Head of caudate nucleus (tissue), 42 donors: ENCODE measurements at regions of chr11 and their contacts with region 1.

Region 1: GRCh38 chr11:96342961-96343711 is at the start of gene MAML2:
- DNase-seq: peak; percentile 87 to 99 (median 95)

Region 2: DNA sequence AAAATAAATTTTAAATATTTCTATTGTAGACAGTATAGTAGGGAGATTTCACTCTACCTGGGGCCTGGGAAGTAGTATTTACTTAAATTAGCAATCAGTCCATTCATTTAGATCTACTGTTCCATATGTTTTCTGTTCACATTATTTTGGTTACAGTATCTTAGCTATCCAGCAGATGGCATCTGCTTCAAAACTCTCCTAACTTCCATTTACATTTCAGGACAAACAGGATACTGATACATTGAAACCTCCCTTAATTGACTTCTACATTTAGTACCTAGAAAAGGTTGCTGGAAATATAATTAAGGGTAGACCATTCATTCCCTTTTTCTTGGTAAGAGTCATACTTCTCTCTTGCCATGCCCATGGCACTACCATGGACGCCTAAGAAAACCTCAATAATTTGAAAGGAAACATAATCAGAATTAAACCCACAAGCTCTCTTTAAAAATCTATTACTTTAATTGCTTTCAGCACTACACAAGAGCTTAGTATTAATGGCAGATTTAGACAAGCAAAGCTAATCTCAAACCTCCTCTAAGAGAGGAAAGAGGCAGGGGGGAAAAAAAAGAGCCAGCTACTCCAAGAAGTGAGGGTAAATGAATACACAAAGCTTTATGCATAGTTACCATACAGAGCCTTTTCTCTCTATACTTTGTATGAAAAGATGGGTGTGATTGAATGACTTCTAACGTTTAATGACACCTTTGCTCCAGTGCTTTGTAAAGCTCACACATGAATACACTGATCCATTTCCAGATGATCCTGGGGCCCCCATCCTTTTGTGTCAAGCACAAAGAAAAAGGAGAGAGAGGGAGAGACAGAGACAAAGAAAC is 288.0 kb before region 1 on chr11:
- intact Hi-C with region 1: loop called (anchors 5 kb)
- DNase-seq: peak in 1 of 42 donors; percentile 32

Region 3: GRCh38 chr11:96242971-96243647 is 100.0 kb before region 1 on chr11:
- intact Hi-C with region 1: loop called (anchors 5 kb)
- DNase-seq: peak; percentile 75 to 96 (median 88)

Region 4: GRCh38 chr11:96267496-96268032 is 75.6 kb before region 1 on chr11:
- intact Hi-C with region 1: loop called (anchors 10 kb)
- DNase-seq: no peak